B cell (primary cell): ENCODE measurements at regions of chr15 and their contacts with region 1.

Region 1: DNA sequence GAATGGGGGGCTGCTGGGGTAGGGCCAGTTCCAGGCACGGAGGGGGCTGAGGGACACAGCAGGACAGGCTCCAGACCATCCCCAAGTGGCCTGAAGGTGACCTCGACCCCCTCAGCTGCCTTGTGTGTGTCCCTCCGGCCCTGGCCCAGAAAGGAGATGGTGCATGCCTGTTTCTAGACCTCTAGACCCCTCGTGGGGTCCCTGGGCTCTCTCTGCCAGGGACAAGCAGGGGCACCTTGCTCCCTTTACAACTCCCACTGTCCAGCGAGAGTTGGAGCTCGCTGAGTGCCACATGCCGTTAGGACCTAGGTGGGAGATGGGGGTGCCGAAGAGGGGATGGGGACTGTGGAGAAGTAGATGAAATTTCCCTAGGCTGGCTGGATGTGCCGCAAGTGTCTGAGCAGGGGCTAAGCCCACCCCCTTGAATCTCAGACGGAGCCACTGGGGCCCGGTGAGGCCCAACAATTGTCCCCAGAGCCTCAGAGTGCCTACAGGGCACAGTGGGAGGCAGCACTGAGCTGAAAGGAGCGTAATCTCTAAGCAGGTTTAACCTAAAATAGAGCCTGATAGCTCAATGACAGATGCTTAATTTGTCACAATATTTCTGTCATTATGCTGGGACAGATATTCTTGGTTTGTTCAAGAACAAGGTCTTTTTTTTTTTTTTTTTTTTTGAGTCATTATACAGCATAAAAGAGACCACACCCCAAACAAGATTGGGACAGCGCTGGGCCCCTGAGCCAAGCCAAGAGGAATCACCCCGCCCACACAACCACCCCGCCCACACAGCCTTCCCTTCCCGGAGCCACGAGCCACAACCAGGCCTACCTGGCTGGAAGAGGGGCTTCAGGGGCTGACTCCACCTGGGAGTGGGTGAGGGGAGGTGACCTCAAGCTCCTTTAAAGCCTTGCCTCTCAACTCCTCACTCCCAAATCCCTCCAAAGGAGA is 23.6 kb upstream of the KLF13 start:
- DNase-seq: peak; percentile 35
- ATAC-seq: peak; percentile 43
- H3K4me3 ChIP-seq: no peak overlapping the region
- H3K4me3 Mint-ChIP-seq: no peak overlapping the region
- H3K27ac ChIP-seq: no peak overlapping the region
- H3K27ac Mint-ChIP-seq: peak overlapping the region; percentile 26
- H3K4me1 ChIP-seq: peaks cover 30 to 53% of the 10 kb centered on the region in 2 donors
- H3K4me1 Mint-ChIP-seq: peaks cover 50% of the 10 kb centered on the region
- H3K27me3 ChIP-seq: no peaks in the 10 kb centered on the region
- H3K27me3 Mint-ChIP-seq: no peaks in the 10 kb centered on the region
- CTCF ChIP-seq: peak; percentile 12

Region 2: DNA sequence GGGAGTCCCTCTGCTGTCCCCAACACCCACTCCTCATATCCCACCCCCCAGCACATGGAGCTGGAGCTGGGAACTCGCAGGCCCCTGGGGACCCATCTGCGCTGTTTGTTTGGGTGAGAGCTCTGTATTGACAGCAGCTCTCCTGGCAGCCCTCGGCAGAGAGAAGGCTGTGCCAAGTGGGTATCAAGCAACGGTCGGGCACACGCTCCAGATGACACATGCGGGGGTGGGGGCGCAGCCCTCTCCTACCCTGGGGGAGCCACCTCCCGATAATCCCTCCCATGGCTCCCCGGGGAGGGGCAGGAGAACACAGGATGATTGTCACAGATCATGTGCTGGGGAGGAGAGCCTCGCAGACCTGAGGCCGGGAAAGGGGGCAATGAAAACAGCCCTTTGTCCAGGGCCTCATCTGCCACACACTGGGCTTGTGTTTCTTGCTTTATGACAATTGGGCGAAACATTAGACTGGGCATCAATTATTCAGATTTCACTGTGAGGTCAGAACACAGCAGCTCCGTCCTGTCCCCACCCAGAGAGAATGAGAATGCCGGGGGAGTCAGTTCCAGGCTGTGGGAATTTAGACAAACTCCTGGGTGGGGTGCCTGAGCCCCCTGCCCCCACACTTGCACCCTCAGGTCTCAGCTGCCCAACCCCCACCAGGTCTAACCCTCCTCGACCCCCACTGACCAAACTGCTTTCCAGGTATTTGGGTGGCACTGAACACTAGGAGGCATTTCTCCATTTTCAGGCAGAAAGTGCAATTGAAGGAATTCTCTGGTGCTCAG is 22.8 kb before region 1 on chr15:
- CTCF ChIA-PET with region 1: no interaction called
- POLR2A ChIA-PET with region 1: interaction called, 11 read pairs
- intact Hi-C with region 1: no loop called
- DNase-seq: no peak
- ATAC-seq: no peak
- H3K4me3 ChIP-seq: no peak overlapping the region
- H3K4me3 Mint-ChIP-seq: no peak overlapping the region
- H3K27ac ChIP-seq: no peak overlapping the region
- H3K27ac Mint-ChIP-seq: no peak overlapping the region
- H3K4me1 ChIP-seq: peaks cover 0 to 5% of the 10 kb centered on the region in 2 donors
- H3K4me1 Mint-ChIP-seq: peaks cover 2% of the 10 kb centered on the region
- H3K27me3 ChIP-seq: no peaks in the 10 kb centered on the region
- H3K27me3 Mint-ChIP-seq: no peaks in the 10 kb centered on the region
- CTCF ChIP-seq: no peak